ENCODE measurements at regions of chr1 and their contacts with region 1.

Region 1: DNA sequence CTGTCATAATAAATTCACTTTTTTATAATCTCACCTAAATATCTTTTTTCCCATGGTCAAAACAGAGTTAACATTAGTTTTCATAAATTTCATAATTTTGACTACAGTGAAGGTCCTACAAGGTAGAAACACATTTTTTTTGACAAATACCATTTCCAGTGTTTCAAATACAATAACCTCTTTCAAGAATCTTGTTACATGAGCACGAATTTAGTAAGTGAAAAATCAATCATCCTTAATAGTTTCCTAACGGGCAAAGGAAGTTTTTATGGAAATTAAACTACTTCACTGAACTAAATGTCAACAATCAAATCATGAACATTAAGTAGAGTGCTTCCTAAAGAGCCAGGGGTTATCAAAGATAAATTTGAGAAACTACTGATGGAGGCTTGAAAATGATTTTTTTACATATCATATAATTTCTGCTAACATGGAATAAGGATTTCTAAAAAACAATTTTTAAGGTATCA is 35.4 kb downstream of the ABL2 start:
- DNase-seq: no peak
- H3K4me3 Mint-ChIP-seq: no peak overlapping the region
- H3K27ac Mint-ChIP-seq: no peak overlapping the region
- H3K4me1 Mint-ChIP-seq: peaks cover 17% of the 10 kb centered on the region
- H3K27me3 Mint-ChIP-seq: no peaks in the 10 kb centered on the region

Region 2: GRCh38 chr1:179121159-179121938 is 72.8 kb before region 1 on chr1:
- CTCF ChIA-PET with region 1: interaction called, 7 read pairs
- POLR2A ChIA-PET with region 1: no interaction called
- intact Hi-C with region 1: loop called (anchors 1 kb)
- DNase-seq: peak; percentile 49
- H3K4me3 Mint-ChIP-seq: no peak overlapping the region
- H3K27ac Mint-ChIP-seq: no peak overlapping the region
- H3K4me1 Mint-ChIP-seq: peaks cover 7% of the 10 kb centered on the region
- H3K27me3 Mint-ChIP-seq: no peaks in the 10 kb centered on the region